Ovary (tissue), 10 donors: ENCODE measurements at regions of chr12 and their contacts with region 1.

Region 1: DNA sequence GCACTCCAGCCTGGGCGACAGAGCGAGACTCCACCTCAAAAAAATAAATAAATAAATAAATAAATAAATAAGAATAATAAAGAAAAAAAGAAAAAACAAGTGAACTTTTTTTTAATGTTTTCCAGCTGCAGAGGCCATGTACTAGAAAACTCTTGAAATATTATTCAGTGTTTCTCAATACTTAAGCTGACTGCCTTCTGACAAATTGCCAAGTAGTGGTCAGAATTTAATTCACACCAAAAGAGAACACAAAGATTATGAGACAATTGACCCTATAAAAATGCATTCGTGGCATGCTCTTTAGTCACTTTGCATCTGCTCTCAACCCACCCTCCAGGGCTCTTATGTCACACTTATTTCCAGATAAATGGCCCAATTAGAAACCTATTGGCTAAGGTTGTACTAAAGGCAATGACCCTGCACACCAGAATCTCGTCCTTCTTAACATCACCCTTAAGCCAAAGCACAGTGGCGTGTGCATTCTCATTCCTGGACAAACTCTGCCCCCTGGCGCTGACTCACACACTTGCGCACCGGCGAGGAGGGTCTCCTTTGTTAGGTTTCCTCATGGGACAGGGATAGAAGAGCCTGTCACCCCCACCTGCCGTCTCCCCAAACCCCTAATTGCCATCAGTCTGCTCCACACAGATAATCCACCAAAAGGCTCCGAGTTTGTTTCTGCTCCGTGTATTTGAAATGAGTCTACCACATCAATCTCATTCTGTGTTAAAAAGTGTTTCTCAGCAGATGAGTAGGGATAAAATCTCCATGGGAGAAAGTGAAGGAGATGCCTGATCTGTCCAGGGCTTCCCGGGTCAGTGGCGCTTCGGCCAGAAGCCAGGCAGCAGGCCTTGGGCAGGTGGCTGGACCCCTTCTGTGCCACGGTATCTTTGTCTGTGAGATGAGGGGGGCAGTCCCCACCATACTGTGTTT is 73.1 kb upstream of the CEP83 start:
- DNase-seq: peak; percentile 64 to 83 (median 83)
- H3K4me3 ChIP-seq: no peak overlapping the region
- H3K27ac ChIP-seq: no peak overlapping the region
- H3K4me1 ChIP-seq: no peaks in the 10 kb centered on the region
- H3K27me3 ChIP-seq: no peaks in the 10 kb centered on the region
- CTCF ChIP-seq: peak; percentile 62 to 81 (median 64)
- EP300 ChIP-seq: no peak
- POLR2A ChIP-seq: no peak

Region 2: GRCh38 chr12:94025756-94026155 is 507.0 kb before region 1 on chr12:
- intact Hi-C with region 1: no loop called
- DNase-seq: no peak
- H3K4me3 ChIP-seq: no peak overlapping the region
- H3K27ac ChIP-seq: no peak overlapping the region
- H3K4me1 ChIP-seq: no peaks in the 10 kb centered on the region
- H3K27me3 ChIP-seq: no peaks in the 10 kb centered on the region
- CTCF ChIP-seq: no peak
- EP300 ChIP-seq: no peak
- POLR2A ChIP-seq: no peak

Region 3: GRCh38 chr12:94101738-94102660 is 430.8 kb before region 1 on chr12:
- intact Hi-C with region 1: no loop called
- DNase-seq: peak; percentile 76 to 88 (median 86)
- H3K4me3 ChIP-seq: peak overlapping the region; percentile 63
- H3K27ac ChIP-seq: no peak overlapping the region
- H3K4me1 ChIP-seq: no peaks in the 10 kb centered on the region
- H3K27me3 ChIP-seq: no peaks in the 10 kb centered on the region
- CTCF ChIP-seq: peak; percentile 69 to 79 (median 69)
- EP300 ChIP-seq: no peak
- POLR2A ChIP-seq: no peak

Region 4: DNA sequence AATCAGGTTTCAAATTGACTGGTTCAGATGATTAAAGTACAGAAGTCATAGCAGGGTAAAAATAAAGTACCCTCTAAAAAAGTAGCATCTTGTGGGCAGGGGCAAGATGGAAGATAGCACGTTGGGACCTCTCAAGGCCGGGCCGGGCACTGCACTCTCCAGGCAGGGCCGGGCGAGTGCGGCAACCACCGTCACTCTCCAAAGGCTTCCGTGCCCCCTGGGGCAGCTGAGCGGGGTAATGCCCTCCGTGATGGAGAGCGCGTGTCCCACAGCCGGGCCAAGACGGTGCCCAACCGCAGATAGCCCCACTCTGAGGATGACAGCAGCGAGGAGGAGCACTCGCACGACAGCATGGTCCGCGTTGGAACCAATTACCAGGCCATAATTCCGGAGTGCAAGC is 392.9 kb before region 1 on chr12:
- intact Hi-C with region 1: loop called (anchors 2 to 5 kb)
- DNase-seq: no peak
- H3K4me3 ChIP-seq: no peak overlapping the region
- H3K27ac ChIP-seq: no peak overlapping the region
- H3K4me1 ChIP-seq: no peaks in the 10 kb centered on the region
- H3K27me3 ChIP-seq: no peaks in the 10 kb centered on the region
- CTCF ChIP-seq: no peak
- EP300 ChIP-seq: no peak
- POLR2A ChIP-seq: no peak

Region 5: GRCh38 chr12:94435511-94435927 is 97.2 kb before region 1 on chr12:
- intact Hi-C with region 1: loop called in 1 of 4 experiments (anchors 10 kb)
- DNase-seq: no peak
- H3K4me3 ChIP-seq: no peak overlapping the region
- H3K27ac ChIP-seq: no peak overlapping the region
- H3K4me1 ChIP-seq: peaks cover 2% of the 10 kb centered on the region
- H3K27me3 ChIP-seq: no peaks in the 10 kb centered on the region
- CTCF ChIP-seq: no peak
- EP300 ChIP-seq: no peak
- POLR2A ChIP-seq: no peak